ENCODE measurements at regions of chr10 and their contacts with region 1.

Region 1: GRCh38 chr10:23994479-23995046 is 214.4 kb upstream of the KIAA1217 start:
- DNase-seq: peak; percentile 73 to 86 (median 78)
- ATAC-seq: peak; percentile 77
- H3K4me3 ChIP-seq: no peak overlapping the region
- H3K27ac ChIP-seq: no peak overlapping the region
- H3K4me1 ChIP-seq: no peaks in the 10 kb centered on the region
- H3K27me3 ChIP-seq: no peaks in the 10 kb centered on the region
- CTCF ChIP-seq: peak; percentile 69 to 94 (median 91)
- POLR2A ChIP-seq: no peak

Region 2: DNA sequence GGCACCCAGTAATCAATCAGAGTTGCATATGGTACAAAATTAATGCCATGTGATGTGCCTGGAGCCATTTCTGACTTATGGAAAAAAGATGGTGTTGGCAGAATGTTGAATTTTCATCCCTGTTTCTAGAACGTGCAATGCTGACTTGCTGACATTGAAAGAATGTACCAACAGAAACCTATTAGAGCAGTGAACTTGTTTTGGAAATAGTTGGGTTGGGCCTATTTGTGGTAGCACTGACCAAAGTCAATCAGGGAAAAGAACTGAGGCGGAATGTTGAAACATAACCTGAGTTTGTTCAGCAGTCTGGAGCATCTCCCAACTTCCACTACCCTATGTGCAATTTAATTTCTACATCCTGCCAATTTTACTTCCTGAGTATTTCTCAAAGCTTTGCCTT is 202.7 kb after region 1 on chr10:
- intact Hi-C with region 1: loop called (anchors 2 kb)
- DNase-seq: no peak
- ATAC-seq: no peak
- H3K4me3 ChIP-seq: no peak overlapping the region
- H3K27ac ChIP-seq: no peak overlapping the region
- H3K4me1 ChIP-seq: peaks cover 8% of the 10 kb centered on the region
- H3K27me3 ChIP-seq: no peaks in the 10 kb centered on the region
- CTCF ChIP-seq: no peak
- POLR2A ChIP-seq: no peak

Region 3: GRCh38 chr10:24360282-24361127 is 365.9 kb after region 1 on chr10:
- intact Hi-C with region 1: loop called (anchors 5 kb)
- DNase-seq: peak; percentile 75 to 90 (median 80)
- ATAC-seq: peak; percentile 90
- H3K4me3 ChIP-seq: no peak overlapping the region
- H3K27ac ChIP-seq: no peak overlapping the region
- H3K4me1 ChIP-seq: peaks cover 8% of the 10 kb centered on the region
- H3K27me3 ChIP-seq: no peaks in the 10 kb centered on the region
- CTCF ChIP-seq: peak; percentile 36 to 85 (median 82)
- POLR2A ChIP-seq: no peak

Region 4: DNA sequence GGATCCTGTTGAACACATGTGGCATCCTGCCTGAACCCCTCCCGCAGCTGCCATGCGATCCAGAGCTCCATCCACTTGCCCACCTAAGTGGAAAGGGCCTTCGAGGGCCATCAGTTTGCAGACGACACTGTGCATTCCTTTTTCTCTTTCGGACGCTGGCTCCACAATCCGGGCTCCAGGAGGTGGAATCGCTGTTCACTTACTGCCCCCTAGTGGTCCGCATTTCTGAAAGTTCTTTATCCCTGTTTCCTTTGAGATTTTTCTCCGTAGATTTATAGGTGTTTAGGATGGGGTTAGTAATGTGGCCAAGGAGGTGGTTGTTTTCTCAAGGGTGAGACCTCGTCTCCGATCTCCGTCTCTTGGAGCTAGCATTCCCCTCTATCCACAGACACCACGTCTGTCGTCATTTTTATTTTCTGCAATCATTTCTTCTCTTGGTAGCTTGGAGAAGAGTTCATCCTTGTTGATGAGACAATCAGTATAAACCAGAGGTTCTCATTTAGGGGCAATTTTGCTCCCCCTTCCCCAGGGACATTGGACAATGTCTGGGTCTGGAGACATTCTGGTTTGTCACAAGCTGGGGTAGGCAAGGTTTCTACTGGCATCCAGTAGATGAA is 524.5 kb after region 1 on chr10:
- intact Hi-C with region 1: loop called (anchors 10 kb)
- DNase-seq: peak; percentile 69 to 76 (median 71)
- ATAC-seq: peak; percentile 75
- H3K4me3 ChIP-seq: no peak overlapping the region
- H3K27ac ChIP-seq: peak overlapping the region in 2 of 4 donors; percentile 30 to 47
- H3K4me1 ChIP-seq: peaks cover 6% of the 10 kb centered on the region
- H3K27me3 ChIP-seq: no peaks in the 10 kb centered on the region
- CTCF ChIP-seq: peak; percentile 64 to 81 (median 74)
- POLR2A ChIP-seq: no peak